ENCODE measurements at regions of chr1 and their contacts with region 1.

Region 1: GRCh38 chr1:29202584-29203340 is 21.1 kb upstream of the SRSF4 start:
- DNase-seq: peak; percentile 97
- H3K4me3 ChIP-seq: no peak overlapping the region
- H3K27ac ChIP-seq: peak overlapping the region; percentile 55 to 75
- H3K4me1 ChIP-seq: no peaks in the 10 kb centered on the region
- H3K27me3 ChIP-seq: no peaks in the 10 kb centered on the region
- CTCF ChIP-seq: peak; percentile 96 to 98 (median 98)
- POLR2A ChIP-seq: no peak

Region 2: GRCh38 chr1:28845786-28846543 is 356.8 kb before region 1 on chr1:
- intact Hi-C with region 1: no loop called
- DNase-seq: no peak
- H3K4me3 ChIP-seq: no peak overlapping the region
- H3K27ac ChIP-seq: no peak overlapping the region
- H3K4me1 ChIP-seq: no peaks in the 10 kb centered on the region
- H3K27me3 ChIP-seq: no peaks in the 10 kb centered on the region
- CTCF ChIP-seq: no peak
- POLR2A ChIP-seq: no peak

Region 3: DNA sequence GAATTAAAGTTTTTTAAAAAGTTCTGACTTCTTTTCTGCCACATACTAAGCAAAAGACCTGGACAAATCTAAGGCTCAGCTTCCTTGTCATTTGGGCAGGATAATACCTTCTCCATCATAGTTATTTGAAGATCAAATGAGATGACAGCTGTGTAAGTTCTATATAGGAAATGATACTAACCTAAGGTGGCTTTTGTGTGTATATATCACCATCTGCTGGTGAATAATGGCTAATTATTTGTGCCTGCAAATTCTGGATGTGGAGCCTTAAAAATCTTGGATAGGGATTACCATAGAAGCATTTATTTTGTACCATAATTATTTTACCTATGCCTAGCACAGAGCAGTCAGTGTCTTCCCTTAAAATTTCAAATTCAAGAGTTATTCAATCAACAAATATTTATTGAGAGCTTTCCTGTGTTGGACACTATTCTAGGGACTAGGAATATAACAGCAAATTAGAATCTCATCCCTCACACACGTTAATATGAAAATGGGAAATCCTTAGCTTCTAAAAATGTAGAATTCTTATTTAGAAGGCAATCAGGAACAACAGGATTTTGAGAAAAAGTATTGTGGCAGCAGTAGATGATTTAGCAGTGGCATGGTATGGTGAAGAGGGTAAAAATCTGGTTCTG is 168.8 kb before region 1 on chr1:
- intact Hi-C with region 1: loop called (anchors 5 kb)
- DNase-seq: no peak
- H3K4me3 ChIP-seq: no peak overlapping the region
- H3K27ac ChIP-seq: no peak overlapping the region
- H3K4me1 ChIP-seq: no peaks in the 10 kb centered on the region
- H3K27me3 ChIP-seq: no peaks in the 10 kb centered on the region
- CTCF ChIP-seq: peak; percentile 18 to 87 (median 77)
- POLR2A ChIP-seq: no peak